ENCODE measurements at regions of chr7 and their contacts with region 1.

Region 1: GRCh38 chr7:106216517-106216922 is 68.3 kb downstream of the NAMPT start:
- DNase-seq: peak; percentile 98
- H3K4me3 Mint-ChIP-seq: peak overlapping the region; percentile 66
- H3K27ac Mint-ChIP-seq: peak overlapping the region; percentile 82
- H3K4me1 Mint-ChIP-seq: peaks cover 36% of the 10 kb centered on the region
- H3K27me3 Mint-ChIP-seq: no peaks in the 10 kb centered on the region
- CTCF ChIP-seq: no peak

Region 2: GRCh38 chr7:106166655-106167342 is 49.7 kb before region 1 on chr7:
- CTCF ChIA-PET with region 1: interaction called, 10 read pairs
- POLR2A ChIA-PET with region 1: interaction called, 3 read pairs
- intact Hi-C with region 1: no loop called
- DNase-seq: peak; percentile 83
- H3K4me3 Mint-ChIP-seq: no peak overlapping the region
- H3K27ac Mint-ChIP-seq: no peak overlapping the region
- H3K4me1 Mint-ChIP-seq: no peaks in the 10 kb centered on the region
- H3K27me3 Mint-ChIP-seq: no peaks in the 10 kb centered on the region
- CTCF ChIP-seq: peak; percentile 77

Region 3: GRCh38 chr7:106239404-106239803 is 22.9 kb after region 1 on chr7:
- CTCF ChIA-PET with region 1: no interaction called
- POLR2A ChIA-PET with region 1: interaction called, 21 read pairs
- intact Hi-C with region 1: no loop called
- DNase-seq: peak; percentile 35
- H3K4me3 Mint-ChIP-seq: no peak overlapping the region
- H3K27ac Mint-ChIP-seq: peak overlapping the region; percentile 39
- H3K4me1 Mint-ChIP-seq: peaks cover 14% of the 10 kb centered on the region
- H3K27me3 Mint-ChIP-seq: no peaks in the 10 kb centered on the region
- CTCF ChIP-seq: no peak

Region 4: DNA sequence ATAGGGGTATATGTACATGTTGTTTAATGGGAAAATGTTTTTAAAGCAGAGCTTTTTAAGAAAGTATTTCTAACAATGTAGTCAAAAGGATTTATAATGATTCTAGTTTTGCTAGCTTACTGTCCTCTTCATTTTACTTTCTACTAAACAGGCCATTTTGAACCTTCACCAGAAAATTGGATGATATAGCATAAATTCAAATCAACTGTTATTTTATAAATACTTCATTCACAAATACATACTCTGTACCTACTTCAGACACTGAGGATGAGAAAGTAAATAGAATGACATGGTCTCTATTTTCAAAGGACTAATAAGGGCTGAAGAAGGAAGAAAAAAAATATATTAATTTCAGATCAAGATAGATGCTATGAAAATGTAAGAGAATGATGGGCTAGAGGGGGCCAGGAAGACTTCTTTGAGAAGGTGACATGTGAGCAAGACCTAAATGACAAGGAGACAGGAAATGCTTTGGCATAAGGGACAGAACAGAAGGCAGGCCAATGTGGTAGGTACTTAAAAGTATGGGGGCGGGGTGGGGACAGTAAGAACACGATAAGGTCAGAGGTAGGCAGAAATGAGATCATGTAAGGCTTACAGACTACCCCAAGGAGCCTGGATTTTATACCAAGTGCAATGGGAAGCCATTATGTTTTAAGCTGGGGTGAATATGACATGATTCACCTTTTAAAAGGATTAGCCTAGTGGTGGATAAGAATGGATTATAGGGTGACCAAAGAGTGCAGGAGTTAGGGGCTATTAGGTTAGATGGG is 63.1 kb after region 1 on chr7:
- CTCF ChIA-PET with region 1: no interaction called
- POLR2A ChIA-PET with region 1: interaction called, 48 read pairs
- intact Hi-C with region 1: no loop called
- DNase-seq: no peak
- H3K4me3 Mint-ChIP-seq: peak overlapping the region; percentile 100
- H3K27ac Mint-ChIP-seq: peak overlapping the region; percentile 28
- H3K4me1 Mint-ChIP-seq: peaks cover 29% of the 10 kb centered on the region
- H3K27me3 Mint-ChIP-seq: no peaks in the 10 kb centered on the region
- CTCF ChIP-seq: no peak

Region 5: GRCh38 chr7:106425017-106425719 is 208.6 kb after region 1 on chr7:
- CTCF ChIA-PET with region 1: interaction called, 3 read pairs
- POLR2A ChIA-PET with region 1: interaction called, 15 read pairs
- intact Hi-C with region 1: no loop called
- DNase-seq: peak; percentile 99
- H3K4me3 Mint-ChIP-seq: peak overlapping the region; percentile 68
- H3K27ac Mint-ChIP-seq: peak overlapping the region; percentile 91
- H3K4me1 Mint-ChIP-seq: peaks cover 53% of the 10 kb centered on the region
- H3K27me3 Mint-ChIP-seq: no peaks in the 10 kb centered on the region
- CTCF ChIP-seq: no peak

Measured in MCF 10A (cell line).